ENCODE measurements at regions of chr12 and their contacts with region 1.

Region 1: GRCh38 chr12:75722714-75723200 is 211.3 kb upstream of the KRR1 start:
- DNase-seq: peak; percentile 93
- ATAC-seq: peak; percentile 13
- H3K4me3 ChIP-seq: no peak overlapping the region
- H3K27ac ChIP-seq: peak overlapping the region; percentile 93
- H3K4me1 ChIP-seq: peaks cover 29% of the 10 kb centered on the region
- H3K27me3 ChIP-seq: no peaks in the 10 kb centered on the region
- CTCF ChIP-seq: no peak
- POLR2A ChIP-seq: no peak
- RAD21 ChIP-seq: 0 out of 2 replicates have a peak, but pooled peaks have one; percentile 10

Region 2: GRCh38 chr12:75684678-75685601 is 37.8 kb before region 1 on chr12:
- CTCF ChIA-PET with region 1: no interaction called
- POLR2A ChIA-PET with region 1: no interaction called
- dilution Hi-C with region 1: no loop called
- in situ Hi-C with region 1: no loop called
- intact Hi-C with region 1: loop called (anchors 2 kb)
- DNase-seq: peak; percentile 86
- ATAC-seq: peak; percentile 84
- H3K4me3 ChIP-seq: peak overlapping the region; percentile 14; the same call in 1 of the 2 replicates
- H3K27ac ChIP-seq: peak overlapping the region; percentile 85
- H3K4me1 ChIP-seq: peaks cover 3% of the 10 kb centered on the region; the same call in 1 of the 2 replicates
- H3K27me3 ChIP-seq: no peaks in the 10 kb centered on the region
- CTCF ChIP-seq: no peak
- POLR2A ChIP-seq: no peak
- RAD21 ChIP-seq: peak; percentile 9; the same call in 1 of the 2 replicates

Region 3: GRCh38 chr12:75705749-75706711 is 16.7 kb before region 1 on chr12:
- CTCF ChIA-PET with region 1: interaction called, 10 read pairs
- POLR2A ChIA-PET with region 1: interaction called, 3 read pairs
- dilution Hi-C with region 1: no loop called
- in situ Hi-C with region 1: no loop called
- intact Hi-C with region 1: loop called (anchors 2 kb)
- DNase-seq: peak; percentile 100
- ATAC-seq: peak; percentile 96
- H3K4me3 ChIP-seq: no peak overlapping the region
- H3K27ac ChIP-seq: peak overlapping the region; percentile 93
- H3K4me1 ChIP-seq: peaks cover 8% of the 10 kb centered on the region
- H3K27me3 ChIP-seq: no peaks in the 10 kb centered on the region
- CTCF ChIP-seq: no peak
- POLR2A ChIP-seq: no peak
- RAD21 ChIP-seq: peak; percentile 28; the same call in 1 of the 2 replicates

Region 4: GRCh38 chr12:76006028-76006925 is 283.5 kb after region 1 on chr12:
- CTCF ChIA-PET with region 1: no interaction called
- POLR2A ChIA-PET with region 1: no interaction called
- dilution Hi-C with region 1: no loop called
- in situ Hi-C with region 1: no loop called
- intact Hi-C with region 1: no loop called
- DNase-seq: no peak
- ATAC-seq: no peak
- H3K4me3 ChIP-seq: no peak overlapping the region
- H3K27ac ChIP-seq: no peak overlapping the region
- H3K4me1 ChIP-seq: peaks cover 12% of the 10 kb centered on the region
- H3K27me3 ChIP-seq: no peaks in the 10 kb centered on the region
- CTCF ChIP-seq: no peak
- POLR2A ChIP-seq: no peak
- RAD21 ChIP-seq: no peak

Measured in IMR-90 (cell line).